PC-3 (cell line): ENCODE measurements at regions of chr5 and their contacts with region 1.

Region 1: GRCh38 chr5:151825445-151825844 is 53.7 kb downstream of the G3BP1 start:
- DNase-seq: peak; percentile 84
- ATAC-seq: peak; percentile 81
- H3K4me3 ChIP-seq: no peak overlapping the region
- H3K27ac ChIP-seq: no peak overlapping the region
- H3K4me1 ChIP-seq: no peaks in the 10 kb centered on the region
- H3K27me3 ChIP-seq: no peaks in the 10 kb centered on the region
- CTCF ChIP-seq: peak; percentile 94

Region 2: GRCh38 chr5:152142840-152143469 is 317.5 kb after region 1 on chr5:
- CTCF ChIA-PET with region 1: interaction called, 17 read pairs
- POLR2A ChIA-PET with region 1: no interaction called
- intact Hi-C with region 1: loop called (anchors 1 kb)
- DNase-seq: peak; percentile 74
- ATAC-seq: peak; percentile 78
- H3K4me3 ChIP-seq: no peak overlapping the region
- H3K27ac ChIP-seq: no peak overlapping the region
- H3K4me1 ChIP-seq: peaks cover 9% of the 10 kb centered on the region; the same call in 1 of the 2 replicates
- H3K27me3 ChIP-seq: no peaks in the 10 kb centered on the region
- CTCF ChIP-seq: peak; percentile 87

Region 3: GRCh38 chr5:152193367-152194107 is 368.1 kb after region 1 on chr5:
- CTCF ChIA-PET with region 1: interaction called, 3 read pairs
- POLR2A ChIA-PET with region 1: no interaction called
- intact Hi-C with region 1: loop called (anchors 1 kb)
- DNase-seq: peak; percentile 90
- ATAC-seq: peak; percentile 76
- H3K4me3 ChIP-seq: peak overlapping the region; percentile 38
- H3K27ac ChIP-seq: peak overlapping the region; percentile 86
- H3K4me1 ChIP-seq: peaks cover 52% of the 10 kb centered on the region
- H3K27me3 ChIP-seq: no peaks in the 10 kb centered on the region
- CTCF ChIP-seq: no peak

Region 4: DNA sequence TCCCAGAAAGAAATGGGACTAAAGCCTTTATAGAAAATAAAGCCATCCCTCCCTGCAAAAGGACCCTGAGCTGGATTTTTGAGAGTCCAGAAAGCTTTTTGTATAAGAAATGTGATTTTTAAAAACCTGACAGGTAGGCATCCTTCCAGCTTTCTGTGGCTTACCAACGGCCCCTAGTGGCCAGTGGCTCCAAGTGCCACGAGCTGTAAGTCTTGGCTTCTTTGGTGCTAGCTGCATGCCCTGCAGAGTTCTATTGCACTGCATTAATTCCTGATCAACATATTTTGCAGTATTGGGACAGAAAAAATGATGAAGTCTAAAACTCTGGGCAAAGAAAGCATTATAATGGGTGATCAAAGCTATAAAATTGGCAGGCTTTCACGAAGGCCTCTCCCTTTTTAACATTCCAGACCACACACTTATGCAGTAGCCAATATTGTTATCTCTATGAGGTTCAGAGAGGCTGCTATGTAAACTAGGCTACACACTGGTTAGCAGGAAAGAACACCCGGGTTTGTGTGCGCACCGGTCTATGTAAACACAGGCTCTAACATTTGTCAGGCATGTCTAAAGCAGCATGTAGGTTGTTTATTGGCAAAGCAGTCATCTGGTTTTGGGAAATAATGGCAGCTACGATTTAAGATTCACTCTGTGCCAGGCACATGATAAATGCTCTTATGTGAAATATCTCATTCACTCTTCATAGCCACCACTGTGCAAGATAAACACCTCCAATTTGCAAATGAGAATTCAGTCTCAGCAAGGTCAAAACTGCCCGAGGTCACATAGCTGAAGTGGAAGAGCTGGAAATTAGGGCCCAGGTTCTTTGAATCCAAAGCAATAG is 524.5 kb after region 1 on chr5:
- CTCF ChIA-PET with region 1: interaction called, 23 read pairs
- POLR2A ChIA-PET with region 1: no interaction called
- intact Hi-C with region 1: loop called (anchors 5 kb)
- DNase-seq: peak; percentile 79
- ATAC-seq: peak; percentile 83
- H3K4me3 ChIP-seq: no peak overlapping the region
- H3K27ac ChIP-seq: no peak overlapping the region
- H3K4me1 ChIP-seq: no peaks in the 10 kb centered on the region
- H3K27me3 ChIP-seq: no peaks in the 10 kb centered on the region
- CTCF ChIP-seq: peak; percentile 98